ENCODE measurements at regions of chr11 and their contacts with region 1.

Region 1: GRCh38 chr11:79007771-79008402 is 432.9 kb downstream of the TENM4 start:
- DNase-seq: peak; percentile 50

Region 2: DNA sequence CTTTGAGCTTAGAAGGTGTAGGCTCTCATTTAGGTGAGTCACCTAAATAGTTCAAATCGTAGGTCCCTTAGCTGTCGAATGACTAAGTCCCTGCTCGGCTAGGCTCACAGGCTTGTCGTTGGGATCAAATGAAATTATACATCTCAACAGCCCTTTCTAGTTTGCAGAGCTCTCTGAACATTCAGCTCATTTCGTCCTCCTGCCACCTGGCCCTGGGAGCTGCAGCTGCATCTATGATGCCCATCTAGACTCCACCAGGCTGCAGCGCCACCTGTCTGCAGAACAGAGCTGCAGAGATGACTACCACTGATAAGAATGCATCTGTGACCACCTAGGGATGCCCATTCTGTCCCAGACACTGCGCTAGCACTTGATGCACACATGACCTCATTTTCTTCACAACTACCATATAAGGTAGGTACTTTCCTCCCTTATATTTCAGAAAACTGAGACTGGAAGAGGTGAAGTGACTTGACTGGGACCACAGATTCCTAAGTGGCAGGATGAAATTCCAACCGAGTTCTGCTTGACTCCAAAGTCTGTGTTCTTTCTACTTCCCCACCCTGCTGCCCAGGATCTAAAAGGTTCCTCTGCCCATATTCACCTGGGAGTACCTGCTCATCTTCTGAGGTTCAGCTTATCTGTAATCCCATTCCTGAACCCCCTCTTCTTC is 292.1 kb before region 1 on chr11:
- CTCF ChIA-PET with region 1: interaction called, 13 read pairs
- POLR2A ChIA-PET with region 1: no interaction called
- DNase-seq: peak; percentile 72